ENCODE measurements at regions of chr6 and their contacts with region 1.

Region 1: DNA sequence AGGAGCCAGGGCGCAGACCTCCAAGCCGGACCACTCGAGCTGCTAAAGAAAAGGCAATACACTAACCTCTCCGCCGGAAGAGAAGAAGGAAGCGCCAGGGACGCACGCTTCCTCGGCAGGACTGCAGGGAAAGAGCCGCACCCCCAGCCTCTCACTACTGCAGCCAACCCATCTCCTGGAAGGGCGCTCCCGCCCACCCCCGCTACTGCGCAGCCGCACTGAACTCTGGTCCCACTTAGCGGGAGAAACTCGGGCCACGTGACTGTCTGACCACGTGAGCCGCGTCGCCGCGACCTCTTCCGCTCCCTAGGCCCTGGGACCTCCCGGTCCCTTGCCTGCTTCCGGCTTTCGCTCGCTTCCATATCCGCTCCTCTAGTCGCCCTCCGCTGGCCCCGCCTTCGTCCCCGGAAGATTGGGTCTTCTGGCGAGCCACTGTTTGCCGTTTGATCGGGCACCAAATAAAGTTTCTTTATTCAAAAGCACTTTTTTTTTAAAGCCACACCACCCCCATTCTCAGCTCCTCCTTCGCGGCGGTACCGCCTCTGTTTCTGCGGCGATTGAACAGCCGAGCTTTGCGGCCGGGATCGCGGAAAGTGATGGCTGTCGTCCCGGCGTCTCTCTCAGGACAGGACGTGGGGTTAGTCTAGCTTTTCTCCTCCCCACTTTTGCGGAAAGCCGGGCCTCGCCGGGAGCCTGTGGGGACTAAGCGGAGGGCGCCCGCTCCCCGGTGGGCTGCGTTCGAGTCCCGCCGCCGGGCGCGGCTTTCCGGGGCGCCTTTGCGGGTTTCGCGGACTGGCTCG is at the start of gene RMND1:
- DNase-seq: peak; percentile 100
- ATAC-seq: peak; percentile 98
- H3K4me3 Mint-ChIP-seq: peak within 1 kb of the TSS; percentile 96
- H3K27ac Mint-ChIP-seq: peak within 1 kb of the TSS; percentile 85
- H3K4me1 Mint-ChIP-seq: peaks cover 30% of the 10 kb centered on the region
- H3K27me3 Mint-ChIP-seq: no peaks in the 10 kb centered on the region
- total RNA-seq, gene RMND1: 20.8 to 21.5 TPM

Region 2: GRCh38 chr6:150004783-150005717 is 1447.1 kb before region 1 on chr6:
- CTCF ChIA-PET with region 1: no interaction called
- POLR2A ChIA-PET with region 1: no interaction called
- intact Hi-C with region 1: loop called in 1 of 2 experiments (anchors 10 kb)
- DNase-seq: peak; percentile 93
- ATAC-seq: peak; percentile 74
- H3K4me3 Mint-ChIP-seq: peak overlapping the region; percentile 75
- H3K27ac Mint-ChIP-seq: no peak overlapping the region
- H3K4me1 Mint-ChIP-seq: peaks cover 59% of the 10 kb centered on the region
- H3K27me3 Mint-ChIP-seq: peaks cover 30% of the 10 kb centered on the region

Region 3: DNA sequence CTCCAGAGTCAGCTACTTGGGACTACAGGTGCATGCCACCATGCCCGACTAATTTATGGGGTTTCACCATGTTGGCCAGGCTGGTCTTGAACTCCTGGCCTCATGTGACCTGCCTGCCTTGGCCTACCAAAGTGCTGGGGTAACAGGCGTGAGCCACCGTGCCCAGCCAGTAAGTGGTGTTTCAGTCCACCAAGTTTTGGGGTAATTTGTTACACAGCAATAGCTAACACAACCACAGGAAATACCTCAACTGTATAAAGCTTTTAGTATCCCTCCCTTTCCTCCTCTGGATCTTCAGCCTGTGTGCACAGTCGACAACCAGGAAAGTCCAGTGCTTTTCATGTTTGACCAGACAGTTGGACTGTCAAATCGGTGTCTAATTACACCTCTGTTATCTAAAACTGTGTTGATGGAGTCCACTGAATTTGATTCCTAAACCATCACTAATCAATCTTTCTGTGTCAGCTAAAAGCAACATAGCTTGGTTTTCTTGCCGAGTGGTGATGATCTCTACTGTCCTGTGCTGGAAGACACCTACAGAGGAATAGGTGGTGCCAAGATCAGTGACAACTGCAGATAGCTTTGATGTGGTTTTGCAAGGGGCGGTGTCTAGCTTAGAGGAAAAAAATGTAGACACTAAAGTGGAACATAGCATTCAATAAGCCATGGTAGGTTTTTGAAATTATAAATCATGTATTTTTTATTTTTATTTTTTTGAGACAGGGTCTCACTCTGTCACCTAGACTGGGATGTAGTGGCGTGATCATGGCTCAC is 38.6 kb before region 1 on chr6:
- CTCF ChIA-PET with region 1: no interaction called
- POLR2A ChIA-PET with region 1: no interaction called
- intact Hi-C with region 1: no loop called
- DNase-seq: peak; percentile 61
- ATAC-seq: peak; percentile 81
- H3K4me3 Mint-ChIP-seq: no peak overlapping the region
- H3K27ac Mint-ChIP-seq: peak overlapping the region; percentile 28
- H3K4me1 Mint-ChIP-seq: peaks cover 18% of the 10 kb centered on the region
- H3K27me3 Mint-ChIP-seq: no peaks in the 10 kb centered on the region

Region 4: GRCh38 chr6:151440930-151441329 is 11.2 kb before region 1 on chr6:
- CTCF ChIA-PET with region 1: interaction called, 10 read pairs
- POLR2A ChIA-PET with region 1: no interaction called
- intact Hi-C with region 1: no loop called
- DNase-seq: no peak
- ATAC-seq: no peak
- H3K4me3 Mint-ChIP-seq: no peak overlapping the region
- H3K27ac Mint-ChIP-seq: peak overlapping the region; percentile 12
- H3K4me1 Mint-ChIP-seq: peaks cover 26% of the 10 kb centered on the region
- H3K27me3 Mint-ChIP-seq: no peaks in the 10 kb centered on the region

Region 5: GRCh38 chr6:152184917-152185574 is 732.9 kb after region 1 on chr6:
- CTCF ChIA-PET with region 1: no interaction called
- POLR2A ChIA-PET with region 1: no interaction called
- intact Hi-C with region 1: loop called in 1 of 2 experiments (anchors 5 kb)
- DNase-seq: peak; percentile 20
- ATAC-seq: peak; percentile 68
- H3K4me3 Mint-ChIP-seq: peak overlapping the region; percentile 72
- H3K27ac Mint-ChIP-seq: peak overlapping the region; percentile 95
- H3K4me1 Mint-ChIP-seq: peaks cover 86% of the 10 kb centered on the region
- H3K27me3 Mint-ChIP-seq: no peaks in the 10 kb centered on the region

Region 6: GRCh38 chr6:152982768-152983636 is 1530.9 kb after region 1 on chr6 and contains the start of gene FBXO5:
- CTCF ChIA-PET with region 1: no interaction called
- POLR2A ChIA-PET with region 1: no interaction called
- intact Hi-C with region 1: loop called in 1 of 2 experiments (anchors 2 kb)
- DNase-seq: peak; percentile 98
- ATAC-seq: peak; percentile 89
- H3K4me3 Mint-ChIP-seq: peak within 1 kb of the TSS; percentile 90
- H3K27ac Mint-ChIP-seq: peak within 1 kb of the TSS; percentile 100
- H3K4me1 Mint-ChIP-seq: peaks cover 34% of the 10 kb centered on the region
- H3K27me3 Mint-ChIP-seq: no peaks in the 10 kb centered on the region
- total RNA-seq, gene FBXO5: 48.7 to 57.3 TPM